ENCODE measurements at regions of chr20 and their contacts with region 1.

Region 1: DNA sequence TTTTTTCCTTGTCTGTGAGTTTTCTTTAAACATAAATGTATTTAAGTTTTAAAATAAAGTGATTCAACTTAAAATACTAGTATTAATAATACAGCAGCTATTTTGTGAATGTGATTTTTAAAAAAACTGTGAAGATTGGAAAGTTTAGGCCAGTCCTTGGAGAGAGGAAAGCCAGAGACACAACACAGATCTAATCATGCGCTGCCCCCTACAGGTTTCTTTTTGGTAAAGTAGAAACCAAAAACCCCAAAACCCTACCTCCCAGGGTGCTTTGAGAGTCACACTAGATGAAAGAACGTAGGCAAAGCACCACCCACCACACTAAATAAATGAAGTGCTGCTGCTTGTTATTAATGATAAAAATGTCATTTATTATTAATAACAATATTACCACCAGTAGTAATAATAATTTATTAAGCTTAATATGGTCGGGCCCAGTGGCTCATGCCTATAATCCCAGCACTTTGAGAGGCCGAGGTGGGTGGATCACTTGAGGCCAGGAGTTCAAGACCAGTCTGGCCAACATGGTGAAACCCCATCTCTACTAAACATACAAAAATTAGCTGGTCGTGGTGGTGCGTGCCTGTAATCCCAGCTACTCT is 33.7 kb downstream of the SLC9A8 start:
- DNase-seq: peak; percentile 77
- H3K4me3 ChIP-seq: no peak overlapping the region
- H3K27ac ChIP-seq: no peak overlapping the region
- H3K4me1 ChIP-seq: no peaks in the 10 kb centered on the region
- CTCF ChIP-seq: peak; percentile 92

Region 2: GRCh38 chr20:49541733-49542513 is 304.4 kb before region 1 on chr20:
- CTCF ChIA-PET with region 1: interaction called, 4 read pairs
- POLR2A ChIA-PET with region 1: no interaction called
- intact Hi-C with region 1: loop called (anchors 2 kb)
- DNase-seq: peak; percentile 89
- H3K4me3 ChIP-seq: no peak overlapping the region
- H3K27ac ChIP-seq: no peak overlapping the region
- H3K4me1 ChIP-seq: no peaks in the 10 kb centered on the region
- CTCF ChIP-seq: peak; percentile 98